ENCODE measurements at regions of chr14 and their contacts with region 1.

Region 1: DNA sequence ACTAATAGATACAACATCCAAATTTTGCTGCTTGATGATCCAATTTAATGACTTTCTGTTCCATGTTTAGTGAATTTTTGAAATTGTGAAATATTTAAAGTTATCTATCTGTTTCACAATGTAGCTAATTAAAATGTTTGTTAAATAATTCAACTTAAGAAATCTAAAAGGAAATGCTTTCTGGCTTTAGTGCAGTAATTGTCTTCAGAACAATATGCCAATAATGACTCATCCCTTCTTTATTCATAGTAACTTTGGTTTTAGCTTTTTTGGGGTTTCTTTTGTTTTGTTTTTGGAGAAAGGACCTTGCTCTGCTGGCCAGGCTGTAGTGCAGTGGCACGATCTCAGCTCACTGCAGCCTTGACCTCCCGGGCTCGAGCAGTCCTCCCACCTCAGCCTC is 479.2 kb upstream of the RGS6 start:
- DNase-seq: no peak
- ATAC-seq: no peak
- H3K4me3 ChIP-seq: no peak overlapping the region
- H3K27ac ChIP-seq: no peak overlapping the region
- H3K4me1 ChIP-seq: peaks cover 65% of the 10 kb centered on the region
- H3K27me3 ChIP-seq: no peaks in the 10 kb centered on the region
- CTCF ChIP-seq: no peak

Region 2: DNA sequence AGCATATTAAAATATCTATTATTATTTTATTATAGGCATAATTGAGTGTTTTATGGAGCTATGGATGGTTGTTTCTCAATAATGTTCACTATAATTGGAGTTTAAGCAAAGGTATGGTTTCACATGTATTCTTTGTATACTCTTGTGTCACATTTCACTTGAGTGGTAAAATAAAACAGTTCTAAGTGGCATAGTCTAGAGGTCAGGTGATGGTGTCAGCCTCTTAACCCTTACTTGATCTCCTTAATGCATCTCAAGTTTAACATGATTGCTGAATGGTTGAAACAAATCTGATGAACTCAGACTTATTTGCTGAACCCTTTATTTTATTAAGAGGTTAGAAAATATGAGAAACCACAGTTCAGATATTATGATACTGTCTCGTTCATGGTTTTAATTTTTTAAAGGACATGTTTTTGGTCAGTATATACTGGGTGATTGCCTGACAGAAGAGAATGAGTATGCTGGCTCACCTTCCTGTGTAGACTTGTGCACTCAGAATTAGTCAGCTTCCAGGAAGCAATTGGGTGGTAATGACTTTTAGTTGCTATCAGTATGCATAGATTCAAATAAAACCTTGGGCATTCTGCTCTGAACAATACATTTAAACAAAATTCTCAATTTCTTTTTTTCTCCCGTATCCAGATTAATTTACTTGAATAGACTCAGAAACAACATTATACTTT is 81.1 kb before region 1 on chr14:
- CTCF ChIA-PET with region 1: no interaction called
- POLR2A ChIA-PET with region 1: no interaction called
- intact Hi-C with region 1: loop called (anchors 2 kb)
- DNase-seq: peak; percentile 78
- ATAC-seq: peak; percentile 98
- H3K4me3 ChIP-seq: peak overlapping the region; percentile 51
- H3K27ac ChIP-seq: peak overlapping the region; percentile 89
- H3K4me1 ChIP-seq: peaks cover 30% of the 10 kb centered on the region
- H3K27me3 ChIP-seq: no peaks in the 10 kb centered on the region
- CTCF ChIP-seq: no peak

Region 3: DNA sequence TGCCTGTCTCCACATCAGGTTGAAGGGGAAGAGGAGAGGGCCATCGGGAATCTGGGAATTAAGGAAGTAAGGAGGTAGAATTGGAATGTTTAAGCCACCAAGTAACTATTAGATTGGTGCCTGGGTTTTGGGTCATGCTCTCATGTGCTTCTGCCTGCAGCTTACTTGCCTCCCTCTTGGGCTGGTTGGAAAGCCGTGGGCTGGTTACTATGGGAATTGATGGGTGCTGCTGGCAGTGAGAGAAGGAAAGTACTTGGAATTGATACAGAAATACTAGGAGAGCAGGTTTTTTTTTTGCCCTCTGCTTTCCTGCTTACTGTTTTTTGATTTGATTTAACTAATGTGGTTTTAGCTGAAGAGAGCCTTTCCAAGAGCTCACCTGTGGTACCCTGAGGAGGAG is 14.3 kb before region 1 on chr14:
- CTCF ChIA-PET with region 1: interaction called, 3 read pairs
- POLR2A ChIA-PET with region 1: no interaction called
- intact Hi-C with region 1: loop called (anchors 1 kb)
- DNase-seq: peak; percentile 9
- ATAC-seq: no peak
- H3K4me3 ChIP-seq: no peak overlapping the region
- H3K27ac ChIP-seq: peak overlapping the region; percentile 81
- H3K4me1 ChIP-seq: peaks cover 33% of the 10 kb centered on the region
- H3K27me3 ChIP-seq: no peaks in the 10 kb centered on the region
- CTCF ChIP-seq: no peak

Region 4: GRCh38 chr14:71651228-71651627 is 198.2 kb after region 1 on chr14:
- CTCF ChIA-PET with region 1: no interaction called
- POLR2A ChIA-PET with region 1: interaction called, 4 read pairs
- intact Hi-C with region 1: loop called (anchors 2 kb)
- DNase-seq: peak; percentile 73
- ATAC-seq: peak; percentile 60
- H3K4me3 ChIP-seq: no peak overlapping the region
- H3K27ac ChIP-seq: peak overlapping the region; percentile 31
- H3K4me1 ChIP-seq: peaks cover 50% of the 10 kb centered on the region
- H3K27me3 ChIP-seq: no peaks in the 10 kb centered on the region
- CTCF ChIP-seq: no peak

Region 5: DNA sequence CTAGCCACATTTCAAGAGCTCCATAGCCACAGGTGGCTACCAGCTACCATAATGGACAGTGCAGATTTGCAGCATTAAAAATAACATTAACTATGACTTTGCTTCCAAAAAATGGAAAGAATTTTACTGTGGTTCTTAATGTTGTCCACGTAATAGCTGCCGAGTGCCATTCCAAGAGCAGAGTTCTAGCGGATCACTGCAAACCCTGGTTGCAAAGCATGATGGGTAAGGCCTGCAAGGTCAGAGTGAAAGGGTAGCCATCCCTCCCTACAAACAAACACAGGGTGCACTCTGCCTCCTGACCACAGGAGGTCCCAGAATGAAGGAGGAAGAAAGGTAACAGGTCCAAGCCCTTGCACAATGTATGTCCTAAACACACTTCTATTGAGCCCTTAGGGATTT is 1283.3 kb after region 1 on chr14:
- CTCF ChIA-PET with region 1: interaction called, 13 read pairs
- POLR2A ChIA-PET with region 1: no interaction called
- intact Hi-C with region 1: no loop called
- DNase-seq: peak; percentile 27
- ATAC-seq: peak; percentile 72
- H3K4me3 ChIP-seq: no peak overlapping the region
- H3K27ac ChIP-seq: no peak overlapping the region
- H3K4me1 ChIP-seq: no peaks in the 10 kb centered on the region
- H3K27me3 ChIP-seq: no peaks in the 10 kb centered on the region
- CTCF ChIP-seq: peak; percentile 47; the same call in 1 of the 2 replicates